K562 (cell line): ENCODE measurements at regions of chr11 and their contacts with region 1.

Region 1: GRCh38 chr11:86978756-86979608 is 23.8 kb upstream of the FZD4 start:
- DNase-seq: peak; percentile 22 to 66 (median 36)
- ATAC-seq: peak; percentile 96
- H3K4me3 ChIP-seq: no peak overlapping the region
- H3K27ac ChIP-seq: no peak overlapping the region
- H3K4me1 ChIP-seq: no peaks in the 10 kb centered on the region; a peak in 1 of 5 replicates
- H3K27me3 ChIP-seq: no peaks in the 10 kb centered on the region
- CTCF ChIP-seq: peak; percentile 46 to 78 (median 48); a peak in 5 of 6 replicates
- EP300 ChIP-seq: no peak
- POLR2A ChIP-seq: no peak
- RAD21 ChIP-seq: peak; percentile 53 to 78

Region 2: DNA sequence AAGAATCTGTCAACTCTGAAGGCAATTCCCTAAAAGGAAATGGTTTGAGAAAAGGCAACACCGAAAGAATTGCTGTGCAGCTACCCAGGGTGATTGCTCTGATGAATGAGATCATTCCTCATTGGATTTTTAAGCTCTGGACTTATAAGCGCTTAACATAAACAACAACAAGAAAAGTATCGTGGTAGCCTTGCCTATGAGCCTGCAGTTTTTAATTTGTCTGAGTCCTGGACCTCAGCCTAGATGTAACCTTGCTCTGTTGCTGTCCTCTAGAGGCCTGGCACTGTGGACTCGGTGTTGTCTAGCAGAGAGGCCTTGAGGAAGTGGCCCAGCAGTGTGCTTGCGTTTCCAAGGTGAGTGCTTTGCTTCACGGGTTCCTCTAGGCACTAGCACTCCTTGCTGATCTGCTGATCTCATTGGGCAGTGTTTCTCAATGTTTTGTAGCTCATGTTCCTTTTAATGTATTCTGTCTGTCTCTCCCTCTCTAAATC is 583.9 kb before region 1 on chr11:
- CTCF ChIA-PET with region 1: no interaction called
- POLR2A ChIA-PET with region 1: no interaction called
- in situ Hi-C with region 1: no loop called
- intact Hi-C with region 1: no loop called
- DNase-seq: peak in 2 of 4 experiments; percentile 13 to 42
- ATAC-seq: peak; percentile 89
- H3K4me3 ChIP-seq: no peak overlapping the region
- H3K27ac ChIP-seq: no peak overlapping the region
- H3K4me1 ChIP-seq: no peaks in the 10 kb centered on the region
- H3K27me3 ChIP-seq: no peaks in the 10 kb centered on the region
- CTCF ChIP-seq: no peak; a peak in 1 of 6 replicates
- EP300 ChIP-seq: no peak
- POLR2A ChIP-seq: no peak
- RAD21 ChIP-seq: peak in 1 of 2 experiments; percentile 36; a peak in 2 of 4 replicates

Region 3: GRCh38 chr11:87290304-87290922 is 311.4 kb after region 1 on chr11:
- CTCF ChIA-PET with region 1: no interaction called
- POLR2A ChIA-PET with region 1: no interaction called
- in situ Hi-C with region 1: no loop called
- intact Hi-C with region 1: loop called (anchors 2 kb)
- DNase-seq: peak; percentile 25 to 72 (median 33)
- ATAC-seq: peak; percentile 80
- H3K4me3 ChIP-seq: no peak overlapping the region
- H3K27ac ChIP-seq: no peak overlapping the region
- H3K4me1 ChIP-seq: no peaks in the 10 kb centered on the region
- H3K27me3 ChIP-seq: no peaks in the 10 kb centered on the region
- CTCF ChIP-seq: peak in 2 of 3 experiments; percentile 42 to 80; a peak in 3 of 6 replicates
- EP300 ChIP-seq: no peak
- POLR2A ChIP-seq: no peak
- RAD21 ChIP-seq: peak; percentile 88 to 90